Activated CD4-positive, alpha-beta T cell treated with anti-CD3 and anti-CD28 coated beads, Interleukin-2, amount 10 ng/mL, durations not matched to agents 24 days and 14 days (primary cell): ENCODE measurements at regions of chr6 and their contacts with region 1.

Region 1: DNA sequence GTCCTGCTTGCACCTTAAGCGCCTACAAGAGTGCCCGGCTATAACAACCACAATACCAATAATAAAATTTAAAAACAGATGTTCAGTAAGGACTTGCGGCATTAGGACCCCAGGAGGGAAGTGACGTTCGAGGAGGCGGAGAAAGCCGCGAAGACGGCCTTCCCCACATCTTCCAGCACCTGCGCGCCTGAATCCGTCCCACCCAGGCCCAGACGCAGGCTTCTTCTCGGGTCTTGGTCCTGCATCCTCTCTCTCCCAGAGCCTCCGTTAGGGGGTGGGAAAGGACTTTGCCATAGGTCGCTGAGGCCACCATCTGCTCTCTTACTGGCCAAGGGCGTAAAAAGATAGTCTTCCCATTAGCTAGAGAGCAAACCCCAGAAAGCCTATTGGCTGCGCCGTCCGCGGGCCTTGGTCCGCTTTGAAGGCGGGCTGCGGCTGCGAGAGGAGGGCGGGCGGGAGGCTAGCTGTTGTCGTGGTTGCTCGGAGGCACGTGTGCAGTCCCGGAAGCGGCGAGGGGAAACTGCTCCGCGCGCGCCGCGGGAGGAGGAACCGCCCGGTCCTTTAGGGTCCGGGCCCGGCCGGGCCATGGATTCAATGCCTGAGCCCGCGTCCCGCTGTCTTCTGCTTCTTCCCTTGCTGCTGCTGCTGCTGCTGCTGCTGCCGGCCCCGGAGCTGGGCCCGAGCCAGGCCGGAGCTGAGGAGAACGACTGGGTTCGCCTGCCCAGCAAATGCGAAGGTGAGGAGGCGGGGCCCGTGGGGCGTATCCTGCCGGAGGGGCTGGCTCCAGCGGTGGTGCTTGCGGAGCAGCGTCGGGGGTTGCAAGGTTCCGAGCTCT is at the start of gene CNPY3:
- DNase-seq: peak; percentile 98
- H3K4me3 Mint-ChIP-seq: peak within 1 kb of the TSS; percentile 91
- H3K27ac Mint-ChIP-seq: peak within 1 kb of the TSS; percentile 98
- H3K4me1 Mint-ChIP-seq: peaks cover 34% of the 10 kb centered on the region
- H3K27me3 Mint-ChIP-seq: no peaks in the 10 kb centered on the region
- total RNA-seq, gene CNPY3: 45.9 and 49.0 TPM in 2 replicates

Region 2: GRCh38 chr6:42745707-42746462 is 183.3 kb before region 1 on chr6 and contains the start of gene TBCC:
- intact Hi-C with region 1: loop called (anchors 1 kb)
- DNase-seq: peak; percentile 97
- H3K4me3 Mint-ChIP-seq: peak within 1 kb of the TSS; percentile 92
- H3K27ac Mint-ChIP-seq: peak within 1 kb of the TSS; percentile 100
- H3K4me1 Mint-ChIP-seq: peaks cover 22% of the 10 kb centered on the region
- H3K27me3 Mint-ChIP-seq: no peaks in the 10 kb centered on the region
- total RNA-seq, gene TBCC: 18.4 TPM in 2 replicates

Region 3: GRCh38 chr6:42890311-42891198 is 38.6 kb before region 1 on chr6:
- intact Hi-C with region 1: loop called (anchors 1 kb)
- DNase-seq: peak; percentile 97
- H3K4me3 Mint-ChIP-seq: peak overlapping the region; percentile 96
- H3K27ac Mint-ChIP-seq: peak overlapping the region; percentile 98
- H3K4me1 Mint-ChIP-seq: peaks cover 21% of the 10 kb centered on the region
- H3K27me3 Mint-ChIP-seq: no peaks in the 10 kb centered on the region

Region 4: DNA sequence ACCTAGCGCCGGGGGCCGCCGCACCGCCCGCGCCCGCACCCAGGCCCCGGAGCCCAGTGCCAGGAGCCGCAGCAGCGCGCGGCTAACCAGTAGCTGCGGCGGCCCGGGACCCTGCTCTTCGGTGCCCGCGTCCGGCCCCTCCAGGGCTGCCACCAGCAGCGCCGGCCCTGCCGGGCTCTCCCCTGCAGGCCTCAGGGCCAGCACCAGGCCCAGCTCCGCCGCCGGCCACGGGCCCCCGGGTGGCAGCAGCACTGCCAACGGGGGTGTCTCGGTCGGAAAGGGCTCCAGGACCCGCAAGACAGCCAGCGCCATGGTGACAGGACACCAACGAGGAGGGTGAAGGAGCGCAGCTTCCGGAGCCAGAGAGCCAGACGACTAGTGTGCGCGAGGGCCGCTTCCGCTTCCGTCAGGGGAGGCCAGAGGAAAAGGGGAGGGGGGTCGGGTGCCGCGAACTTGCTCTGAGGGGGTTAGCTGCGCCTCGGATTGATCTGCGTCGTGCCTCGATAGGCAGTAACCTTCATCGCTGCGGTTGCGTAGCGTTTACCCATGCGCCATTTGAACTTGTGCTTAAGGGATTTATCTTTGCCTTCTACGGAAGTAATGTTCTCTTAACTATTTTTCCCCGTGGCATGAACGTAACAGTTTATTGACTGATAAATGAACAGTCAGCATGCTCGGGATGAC is 49.8 kb after region 1 on chr6 and contains the start of gene PEX6:
- intact Hi-C with region 1: loop called (anchors 1 kb)
- DNase-seq: peak; percentile 99
- H3K4me3 Mint-ChIP-seq: peak within 1 kb of the TSS; percentile 91
- H3K27ac Mint-ChIP-seq: peak within 1 kb of the TSS; percentile 97
- H3K4me1 Mint-ChIP-seq: peaks cover 34% of the 10 kb centered on the region
- H3K27me3 Mint-ChIP-seq: no peaks in the 10 kb centered on the region
- total RNA-seq, gene PEX6: 24.0 and 24.1 TPM in 2 replicates

Region 5: GRCh38 chr6:43013843-43014433 is 84.7 kb after region 1 on chr6 and contains the starts of genes KLHDC3 and MEA1:
- intact Hi-C with region 1: loop called (anchors 1 kb)
- DNase-seq: peak; percentile 100
- H3K4me3 Mint-ChIP-seq: peak within 1 kb of the TSS; percentile 99
- H3K27ac Mint-ChIP-seq: peak within 1 kb of the TSS; percentile 92
- H3K4me1 Mint-ChIP-seq: peaks cover 44% of the 10 kb centered on the region
- H3K27me3 Mint-ChIP-seq: no peaks in the 10 kb centered on the region
- total RNA-seq, gene KLHDC3: 73.8 and 77.5 TPM in 2 replicates
- total RNA-seq, gene MEA1: 93.5 and 94.3 TPM in 2 replicates

Region 6: GRCh38 chr6:43059168-43060033 is 130.2 kb after region 1 on chr6 and contains the starts of genes KLC4 and MRPL2:
- intact Hi-C with region 1: loop called (anchors 1 kb)
- DNase-seq: peak; percentile 99
- H3K4me3 Mint-ChIP-seq: peak within 1 kb of the TSS; percentile 99
- H3K27ac Mint-ChIP-seq: peak within 1 kb of the TSS; percentile 98
- H3K4me1 Mint-ChIP-seq: peaks cover 35% of the 10 kb centered on the region
- H3K27me3 Mint-ChIP-seq: no peaks in the 10 kb centered on the region
- total RNA-seq, gene KLC4: 9.5 and 10.7 TPM in 2 replicates
- total RNA-seq, gene MRPL2: 83.8 and 103 TPM in 2 replicates